Activated B cell treated with CpG ODN at 0.5 μM for 24 hours (primary cell): ENCODE measurements at regions of chr6 and their contacts with region 1.

Region 1: DNA sequence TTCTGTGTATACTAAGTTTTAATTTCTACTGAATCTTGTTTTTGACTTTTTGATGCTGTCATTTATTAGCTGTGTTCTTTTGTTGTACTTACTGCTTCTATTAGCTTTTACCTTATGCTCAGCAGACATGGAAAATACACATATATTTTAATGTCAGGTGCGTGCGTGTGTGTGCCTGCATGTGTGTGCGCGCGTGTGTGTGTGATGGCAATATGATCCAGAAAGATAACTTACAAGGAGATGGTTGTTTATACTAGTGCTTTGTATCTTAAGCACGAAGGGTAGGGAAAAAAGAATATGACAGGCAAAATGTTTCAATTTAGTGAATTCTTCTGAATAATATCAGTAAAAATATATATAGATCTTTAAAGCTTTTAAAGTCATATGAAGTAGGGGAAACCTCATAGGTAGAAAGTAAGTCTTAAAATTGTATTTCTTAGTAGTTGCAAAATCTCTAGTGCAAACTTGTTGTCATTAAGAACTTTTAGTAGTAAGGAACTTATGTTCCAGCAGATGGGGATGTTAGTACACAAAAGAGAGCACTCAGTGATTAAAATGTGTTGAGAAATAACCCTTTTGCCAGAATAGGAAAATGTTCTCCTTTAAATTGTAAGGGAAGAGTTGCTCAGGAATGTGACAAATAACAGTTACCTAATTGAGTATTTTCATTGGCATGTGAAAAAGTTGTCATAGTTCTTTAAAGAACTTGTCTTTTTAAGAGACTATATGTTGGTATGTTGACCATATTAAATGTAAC is 13.2 kb downstream of the QKI start:
- DNase-seq: no peak
- ATAC-seq: no peak
- H3K4me3 Mint-ChIP-seq: no peak overlapping the region
- H3K27ac Mint-ChIP-seq: no peak overlapping the region
- H3K4me1 Mint-ChIP-seq: peaks cover 45% of the 10 kb centered on the region
- H3K27me3 Mint-ChIP-seq: no peaks in the 10 kb centered on the region
- CTCF ChIP-seq: no peak

Region 2: GRCh38 chr6:163443985-163444533 is 16.4 kb after region 1 on chr6:
- CTCF ChIA-PET with region 1: no interaction called
- POLR2A ChIA-PET with region 1: no interaction called
- intact Hi-C with region 1: loop called (anchors 2 kb)
- DNase-seq: no peak
- ATAC-seq: no peak
- H3K4me3 Mint-ChIP-seq: no peak overlapping the region
- H3K27ac Mint-ChIP-seq: no peak overlapping the region
- H3K4me1 Mint-ChIP-seq: peaks cover 49% of the 10 kb centered on the region
- H3K27me3 Mint-ChIP-seq: no peaks in the 10 kb centered on the region
- CTCF ChIP-seq: no peak

Region 3: GRCh38 chr6:163588220-163588919 is 160.7 kb after region 1 on chr6:
- CTCF ChIA-PET with region 1: no interaction called
- POLR2A ChIA-PET with region 1: no interaction called
- intact Hi-C with region 1: no loop called
- DNase-seq: no peak
- ATAC-seq: no peak
- H3K4me3 Mint-ChIP-seq: no peak overlapping the region
- H3K27ac Mint-ChIP-seq: no peak overlapping the region
- H3K4me1 Mint-ChIP-seq: no peaks in the 10 kb centered on the region
- H3K27me3 Mint-ChIP-seq: no peaks in the 10 kb centered on the region
- CTCF ChIP-seq: no peak

Region 4: DNA sequence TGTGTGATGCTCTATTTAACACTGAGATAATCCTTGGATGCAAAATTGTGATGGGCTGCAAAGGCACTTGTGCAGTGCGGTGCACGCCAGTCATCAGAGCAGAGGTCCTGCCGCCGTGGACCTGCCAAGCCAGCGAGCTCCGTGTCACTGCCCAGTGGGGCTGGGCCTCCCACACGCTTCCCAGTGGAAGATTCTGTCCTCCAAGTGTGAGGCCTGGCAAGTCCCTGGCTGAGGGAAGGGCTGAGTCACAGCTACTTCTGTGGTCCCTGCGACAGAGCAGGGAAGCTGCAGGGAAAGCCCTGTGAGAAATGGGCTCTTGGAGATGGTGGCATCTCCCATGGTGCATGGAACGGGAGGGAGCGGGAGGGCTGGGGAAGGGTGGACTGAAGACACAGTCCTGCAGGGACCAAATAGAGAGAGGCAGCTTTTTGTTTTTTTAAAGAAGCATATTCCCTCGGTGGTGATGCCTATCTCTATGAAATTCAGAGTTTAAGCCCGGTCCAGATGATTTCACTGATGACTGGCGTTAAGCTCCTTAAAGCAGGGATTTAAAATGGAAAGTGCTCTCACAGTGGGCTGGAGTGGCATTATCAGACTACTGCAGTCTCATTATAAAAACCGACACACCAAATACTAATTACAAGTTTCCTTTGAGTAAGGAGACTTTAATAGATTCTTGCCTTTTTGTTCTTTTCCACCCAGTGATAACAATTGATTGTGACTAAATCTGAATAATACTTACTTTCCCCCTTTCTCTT is 400.5 kb after region 1 on chr6:
- CTCF ChIA-PET with region 1: no interaction called
- POLR2A ChIA-PET with region 1: no interaction called
- intact Hi-C with region 1: no loop called
- DNase-seq: no peak
- ATAC-seq: no peak
- H3K4me3 Mint-ChIP-seq: no peak overlapping the region
- H3K27ac Mint-ChIP-seq: no peak overlapping the region
- H3K4me1 Mint-ChIP-seq: no peaks in the 10 kb centered on the region
- H3K27me3 Mint-ChIP-seq: peaks cover 11% of the 10 kb centered on the region
- CTCF ChIP-seq: no peak